Esophagus muscularis mucosa (tissue), 4 donors: ENCODE measurements at regions of chr11 and their contacts with region 1.

Region 1: GRCh38 chr11:133834682-133835592 is 10.4 kb downstream of the SPATA19 start:
- DNase-seq: peak; percentile 87
- H3K4me3 ChIP-seq: no peak overlapping the region
- H3K27ac ChIP-seq: no peak overlapping the region
- H3K4me1 ChIP-seq: peaks cover 0 to 13% (median 0%) of the 10 kb centered on the region in 4 donors
- H3K27me3 ChIP-seq: peaks cover 0 to 28% (median 9%) of the 10 kb centered on the region in 4 donors
- CTCF ChIP-seq: peak; percentile 67 to 77 (median 70)
- EP300 ChIP-seq: no peak
- POLR2A ChIP-seq: no peak

Region 2: GRCh38 chr11:133082851-133083488 is 752.0 kb before region 1 on chr11:
- intact Hi-C with region 1: loop called (anchors 5 kb)
- DNase-seq: no peak
- H3K4me3 ChIP-seq: peak overlapping the region; percentile 46 to 62 (median 46)
- H3K27ac ChIP-seq: no peak overlapping the region
- H3K4me1 ChIP-seq: peaks cover 0 to 14% (median 11%) of the 10 kb centered on the region in 4 donors
- H3K27me3 ChIP-seq: peaks cover 0 to 87% (median 7%) of the 10 kb centered on the region in 4 donors
- CTCF ChIP-seq: peak; percentile 80 to 97 (median 94)
- EP300 ChIP-seq: no peak
- POLR2A ChIP-seq: no peak

Region 3: GRCh38 chr11:133134314-133135173 is 700.4 kb before region 1 on chr11:
- intact Hi-C with region 1: loop called (anchors 1 kb)
- DNase-seq: no peak
- H3K4me3 ChIP-seq: no peak overlapping the region
- H3K27ac ChIP-seq: no peak overlapping the region
- H3K4me1 ChIP-seq: no peaks in the 10 kb centered on the region
- H3K27me3 ChIP-seq: peaks cover 0 to 33% (median 0%) of the 10 kb centered on the region in 4 donors
- CTCF ChIP-seq: peak; percentile 57 to 86 (median 84)
- EP300 ChIP-seq: no peak
- POLR2A ChIP-seq: no peak

Region 4: GRCh38 chr11:133742353-133742752 is 92.6 kb before region 1 on chr11:
- intact Hi-C with region 1: no loop called
- DNase-seq: no peak
- H3K4me3 ChIP-seq: no peak overlapping the region
- H3K27ac ChIP-seq: no peak overlapping the region
- H3K4me1 ChIP-seq: no peaks in the 10 kb centered on the region
- H3K27me3 ChIP-seq: peaks cover 0 to 6% (median 0%) of the 10 kb centered on the region in 4 donors
- CTCF ChIP-seq: no peak
- EP300 ChIP-seq: no peak
- POLR2A ChIP-seq: no peak

Region 5: GRCh38 chr11:133898031-133898769 is 63.3 kb after region 1 on chr11:
- intact Hi-C with region 1: no loop called
- DNase-seq: no peak
- H3K4me3 ChIP-seq: no peak overlapping the region
- H3K27ac ChIP-seq: no peak overlapping the region
- H3K4me1 ChIP-seq: peaks cover 8 to 21% (median 16%) of the 10 kb centered on the region in 4 donors
- H3K27me3 ChIP-seq: no peaks in the 10 kb centered on the region
- CTCF ChIP-seq: no peak
- EP300 ChIP-seq: no peak
- POLR2A ChIP-seq: no peak